Dorsolateral prefrontal cortex (tissue), 120 donors: ENCODE measurements at regions of chr11 and their contacts with region 1.

Region 1: DNA sequence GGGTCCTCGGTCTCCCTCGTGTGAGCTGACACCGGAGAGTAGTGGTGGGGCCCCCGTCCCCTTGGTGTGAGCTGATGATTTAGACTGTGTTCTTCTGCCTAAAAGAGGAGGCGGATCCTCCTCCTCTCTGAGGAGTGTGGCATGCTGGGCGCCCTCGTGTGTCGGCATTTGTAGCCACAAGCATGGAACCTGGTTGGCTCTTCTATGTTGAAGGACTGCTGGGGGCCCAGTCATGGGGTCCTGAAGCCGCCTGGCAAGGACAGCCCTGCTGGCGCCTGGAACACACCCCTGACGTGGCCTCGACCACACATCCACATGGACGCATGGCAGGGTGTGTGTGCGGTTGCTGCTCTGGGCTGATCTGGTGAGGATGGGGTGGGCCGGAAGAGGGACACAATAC is 50.2 kb downstream of the AP2A2 start:
- DNase-seq: peak in 6 of 10 donors; percentile 38 to 80 (median 72)
- H3K4me3 ChIP-seq: no peak overlapping the region
- H3K27ac ChIP-seq: peak overlapping the region in 24 of 59 donors; percentile 18 to 72 (median 44)
- H3K27me3 ChIP-seq: no peaks in the 10 kb centered on the region
- CTCF ChIP-seq: peak in 30 of 56 donors; percentile 9 to 39 (median 20)

Region 2: DNA sequence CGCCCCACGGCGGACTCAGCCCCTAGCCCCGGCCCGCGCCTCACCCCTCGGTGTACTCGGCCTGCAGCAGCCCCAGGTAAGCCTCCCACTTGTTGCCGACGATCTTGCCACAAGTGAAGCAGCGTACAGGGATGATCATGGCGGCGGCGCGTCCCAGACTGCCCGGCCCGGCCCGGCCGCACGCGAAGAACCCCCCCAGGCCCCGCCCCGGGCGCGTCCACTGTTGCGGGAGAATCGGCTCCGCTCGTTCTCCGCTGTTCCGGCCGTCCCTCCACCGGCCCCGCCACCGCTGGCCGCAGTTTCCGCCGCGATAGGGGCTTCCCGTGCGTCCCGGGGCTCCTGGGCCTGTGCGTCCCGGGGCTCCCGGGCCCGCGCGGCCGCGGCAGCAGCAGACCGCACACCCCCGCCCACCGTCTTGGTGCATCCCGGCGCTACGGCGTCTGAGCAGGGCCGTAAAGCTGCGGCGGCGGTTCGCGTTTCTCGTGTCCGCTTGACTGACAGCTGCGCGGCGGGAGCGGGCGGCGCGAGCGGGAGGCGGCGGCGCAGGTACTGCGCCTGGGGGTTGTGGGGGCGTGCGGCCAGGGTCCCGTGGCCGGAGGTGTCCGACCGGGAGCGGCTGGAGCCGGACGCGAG is 133.3 kb before region 1 on chr11 and contains the starts of genes POLR2L and TSPAN4:
- intact Hi-C with region 1: loop called (anchors 5 to 10 kb)
- DNase-seq: peak; percentile 74 to 92 (median 86)
- H3K4me3 ChIP-seq: peak within 1 kb of the TSS; percentile 71 to 100 (median 95)
- H3K27ac ChIP-seq: peak within 1 kb of the TSS; percentile 70 to 99 (median 97)
- H3K27me3 ChIP-seq: peaks cover 0 to 3% (median 0%) of the 10 kb centered on the region in 45 donors
- CTCF ChIP-seq: peak in 9 of 56 donors; percentile 3 to 49 (median 12)
- total RNA-seq, gene POLR2L: 37.4 to 86.4 (median 53.8) TPM
- total RNA-seq, gene TSPAN4: 5.9 to 25.0 (median 10.9) TPM

Region 3: GRCh38 chr11:848380-848931 is 127.4 kb before region 1 on chr11:
- intact Hi-C with region 1: loop called (anchors 5 to 10 kb)
- DNase-seq: peak in 2 of 10 donors; percentile 62 to 67
- H3K4me3 ChIP-seq: peak overlapping the region in 10 of 59 donors; percentile 8 to 67 (median 59)
- H3K27ac ChIP-seq: no peak overlapping the region
- H3K27me3 ChIP-seq: peaks cover 0 to 38% (median 25%) of the 10 kb centered on the region in 45 donors
- CTCF ChIP-seq: peak; percentile 21 to 90 (median 82)

Region 4: GRCh38 chr11:925496-926321 is 50.1 kb before region 1 on chr11 and contains the start of gene AP2A2:
- intact Hi-C with region 1: loop called (anchors 1 to 2 kb)
- DNase-seq: peak; percentile 57 to 90 (median 80)
- H3K4me3 ChIP-seq: peak within 1 kb of the TSS; percentile 54 to 86 (median 75)
- H3K27ac ChIP-seq: peak within 1 kb of the TSS in 58 of 59 donors; percentile 24 to 94 (median 81)
- H3K27me3 ChIP-seq: no peaks in the 10 kb centered on the region
- CTCF ChIP-seq: peak in 55 of 56 donors; percentile 39 to 89 (median 76)
- total RNA-seq, gene AP2A2: 90.2 to 214 (median 158) TPM

Region 5: DNA sequence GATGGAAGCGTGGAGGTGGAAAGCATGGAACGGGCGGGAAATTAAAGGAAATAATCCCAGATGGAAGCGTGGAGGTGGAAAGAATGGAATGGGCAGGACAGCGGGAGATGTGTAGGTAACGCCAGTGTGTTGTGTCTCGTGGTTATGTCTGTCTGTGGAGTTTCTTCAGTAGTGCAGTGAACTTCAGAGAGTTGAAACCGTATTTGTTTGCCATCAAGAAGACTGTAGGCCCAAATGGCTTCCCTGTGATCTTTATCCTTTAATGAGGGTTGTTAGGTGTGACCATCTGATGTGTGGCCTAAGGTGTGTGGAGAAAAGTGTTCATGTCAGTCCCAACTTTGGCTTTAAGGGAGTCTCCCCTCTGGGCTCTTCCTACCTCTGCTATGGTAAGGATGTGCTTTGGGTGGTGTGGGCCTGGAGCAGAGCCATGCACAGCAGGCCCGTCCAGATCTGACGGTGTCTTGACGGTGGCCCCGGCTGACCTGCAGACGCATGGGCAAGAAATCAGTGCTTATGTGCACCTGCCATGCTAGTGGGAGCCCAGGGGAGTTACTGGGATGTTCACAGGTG is 10.5 kb before region 1 on chr11:
- intact Hi-C with region 1: no loop called
- DNase-seq: no peak
- H3K4me3 ChIP-seq: no peak overlapping the region
- H3K27ac ChIP-seq: no peak overlapping the region
- H3K27me3 ChIP-seq: no peaks in the 10 kb centered on the region
- CTCF ChIP-seq: no peak